ENCODE measurements at regions of chr9 and their contacts with region 1.

Region 1: GRCh38 chr9:74534841-74535240 is 37.7 kb downstream of the RORB start:
- DNase-seq: no peak
- ATAC-seq: no peak
- H3K4me3 ChIP-seq: no peak overlapping the region
- H3K27ac ChIP-seq: no peak overlapping the region
- H3K4me1 ChIP-seq: no peaks in the 10 kb centered on the region
- H3K27me3 ChIP-seq: peaks cover 12% of the 10 kb centered on the region; the same call in 1 of the 2 replicates
- CTCF ChIP-seq: no peak
- POLR2A ChIP-seq: no peak
- RAD21 ChIP-seq: no peak

Region 2: DNA sequence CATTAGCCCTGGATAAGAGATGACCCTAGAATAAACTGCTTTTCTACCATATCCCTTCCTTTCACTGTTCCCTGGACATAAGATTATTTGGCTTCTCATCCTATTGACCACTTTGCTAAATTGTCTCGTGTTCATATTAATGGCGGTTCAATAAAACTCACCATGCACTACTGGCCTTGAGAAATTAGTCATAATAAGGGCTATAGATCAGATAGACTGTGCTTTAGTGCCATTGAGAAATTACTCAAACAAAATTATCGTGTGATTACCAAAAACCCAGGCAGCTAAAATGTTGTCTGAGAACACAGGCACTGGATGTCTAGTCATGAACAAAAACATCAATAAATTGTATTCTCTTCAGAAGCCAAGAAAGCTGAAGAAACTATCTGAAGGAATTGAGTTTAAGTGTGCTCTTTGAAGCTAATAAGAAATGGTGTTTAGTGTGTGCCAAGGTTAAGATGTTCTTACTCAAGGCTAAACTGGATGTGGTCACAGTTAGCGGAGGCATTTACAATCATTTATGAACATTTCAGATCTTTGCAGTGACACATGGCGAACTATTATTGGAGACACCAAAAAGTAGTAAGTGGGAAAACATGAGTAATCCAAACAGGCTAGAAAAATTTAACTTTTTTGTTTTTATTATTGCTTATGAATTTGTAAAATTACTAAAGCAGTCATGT is 498.2 kb before region 1 on chr9:
- CTCF ChIA-PET with region 1: no interaction called
- POLR2A ChIA-PET with region 1: no interaction called
- RAD21 ChIA-PET with region 1: no interaction called
- intact Hi-C with region 1: no loop called
- DNase-seq: no peak
- ATAC-seq: no peak
- H3K4me3 ChIP-seq: no peak overlapping the region
- H3K27ac ChIP-seq: no peak overlapping the region
- H3K4me1 ChIP-seq: no peaks in the 10 kb centered on the region
- H3K27me3 ChIP-seq: no peaks in the 10 kb centered on the region; the same call in 1 of the 2 replicates
- CTCF ChIP-seq: no peak
- POLR2A ChIP-seq: no peak
- RAD21 ChIP-seq: no peak

Region 3: GRCh38 chr9:74205056-74205455 is 329.8 kb before region 1 on chr9:
- CTCF ChIA-PET with region 1: no interaction called
- POLR2A ChIA-PET with region 1: no interaction called
- RAD21 ChIA-PET with region 1: no interaction called
- intact Hi-C with region 1: no loop called
- DNase-seq: no peak
- ATAC-seq: no peak
- H3K4me3 ChIP-seq: no peak overlapping the region
- H3K27ac ChIP-seq: no peak overlapping the region
- H3K4me1 ChIP-seq: no peaks in the 10 kb centered on the region
- H3K27me3 ChIP-seq: no peaks in the 10 kb centered on the region
- CTCF ChIP-seq: no peak
- POLR2A ChIP-seq: no peak
- RAD21 ChIP-seq: no peak

Region 4: DNA sequence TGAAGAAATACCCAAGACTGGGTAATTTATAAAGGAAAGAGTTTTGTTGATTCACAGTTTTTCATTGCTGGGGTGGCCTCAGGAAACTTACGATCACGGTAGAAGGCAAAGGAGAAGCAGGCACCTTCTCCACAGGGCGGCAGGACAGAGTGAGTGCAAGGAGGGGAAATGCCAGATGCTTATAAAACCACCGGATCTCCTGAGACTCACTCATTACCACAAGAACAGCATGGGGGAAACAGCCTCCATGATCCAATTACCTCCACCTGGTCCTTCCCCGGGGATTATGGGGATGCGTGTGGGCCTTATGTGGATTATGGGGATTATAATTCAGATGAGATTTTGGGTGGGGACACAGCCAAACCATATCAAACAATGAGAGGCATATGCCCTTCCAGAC is 56.2 kb before region 1 on chr9:
- CTCF ChIA-PET with region 1: no interaction called
- POLR2A ChIA-PET with region 1: no interaction called
- RAD21 ChIA-PET with region 1: no interaction called
- intact Hi-C with region 1: loop called (anchors 10 kb)
- DNase-seq: no peak
- ATAC-seq: no peak
- H3K4me3 ChIP-seq: no peak overlapping the region
- H3K27ac ChIP-seq: no peak overlapping the region
- H3K4me1 ChIP-seq: no peaks in the 10 kb centered on the region
- H3K27me3 ChIP-seq: no peaks in the 10 kb centered on the region
- CTCF ChIP-seq: no peak
- POLR2A ChIP-seq: no peak
- RAD21 ChIP-seq: no peak

Measured in HCT116 (cell line).